GM12878 (cell line): ENCODE measurements at regions of chr7 and their contacts with region 1.

Region 1: DNA sequence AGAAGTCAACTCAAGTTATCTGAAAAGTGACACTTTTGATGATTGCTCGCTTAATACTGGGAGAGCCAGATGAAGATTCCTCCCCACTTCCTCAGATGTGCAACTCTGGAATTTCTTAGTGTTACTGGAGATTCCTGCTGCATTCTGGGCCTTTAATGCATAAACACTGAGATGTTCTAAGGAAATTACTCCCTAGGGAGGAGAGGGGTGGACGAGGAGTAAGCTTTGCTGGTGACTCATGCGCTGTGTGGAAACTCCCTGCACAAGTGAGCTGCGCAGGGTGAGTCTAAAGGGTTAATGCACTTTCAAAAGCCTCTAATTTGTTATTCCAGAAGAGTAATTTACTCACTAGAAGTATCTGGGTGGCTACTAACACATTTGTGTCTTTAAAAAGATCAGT is 46.3 kb downstream of the EGFR start:
- DNase-seq: peak; percentile 31
- ATAC-seq: peak; percentile 88
- H3K4me3 ChIP-seq: no peak overlapping the region
- H3K27ac ChIP-seq: no peak overlapping the region
- H3K4me1 ChIP-seq: peaks cover 3% of the 10 kb centered on the region; the same call in 1 of the 2 replicates
- H3K27me3 ChIP-seq: no peaks in the 10 kb centered on the region
- CTCF ChIP-seq: no peak
- EP300 ChIP-seq: no peak; a peak in 1 of 4 replicates
- POLR2A ChIP-seq: no peak
- RAD21 ChIP-seq: no peak

Region 2: DNA sequence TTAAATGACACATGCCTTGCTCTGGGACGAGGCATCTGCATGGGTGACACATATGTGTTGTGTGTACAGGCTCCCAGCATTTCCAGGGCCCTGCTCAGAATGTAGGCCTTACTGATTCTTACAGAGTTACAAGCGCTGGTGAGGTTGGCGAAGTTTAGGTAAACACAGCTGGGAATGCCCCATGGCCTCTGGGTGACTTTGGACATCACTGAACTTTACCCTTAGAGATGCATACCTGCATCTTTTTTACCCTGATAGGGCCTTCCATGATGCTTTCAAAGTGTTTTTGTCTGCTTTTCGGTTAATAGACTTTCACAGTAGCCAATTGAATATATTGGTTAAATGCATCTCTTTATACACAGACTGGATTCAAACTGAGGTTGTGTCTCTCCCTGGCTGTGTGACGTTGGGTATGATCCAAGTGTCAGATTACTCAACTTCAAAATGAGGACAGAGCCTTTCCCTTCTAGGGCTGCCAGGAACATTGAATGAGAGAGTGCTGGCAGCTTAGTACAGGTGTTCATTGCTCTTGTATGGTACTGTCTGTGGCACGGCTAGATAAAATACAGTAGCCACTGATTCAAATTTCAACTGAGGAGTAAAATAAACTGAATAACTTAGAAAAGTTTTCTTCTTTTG is 16.7 kb before region 1 on chr7:
- CTCF ChIA-PET with region 1: interaction called, 4 read pairs
- POLR2A ChIA-PET with region 1: interaction called, 4 read pairs
- RAD21 ChIA-PET with region 1: interaction called, 9 read pairs
- SMC1A ChIA-PET with region 1: interaction called, 12 read pairs
- in situ Hi-C with region 1: no loop called
- intact Hi-C with region 1: no loop called
- DNase-seq: no peak
- ATAC-seq: no peak
- H3K4me3 ChIP-seq: no peak overlapping the region
- H3K27ac ChIP-seq: no peak overlapping the region
- H3K4me1 ChIP-seq: no peaks in the 10 kb centered on the region
- H3K27me3 ChIP-seq: no peaks in the 10 kb centered on the region
- CTCF ChIP-seq: no peak
- EP300 ChIP-seq: no peak
- POLR2A ChIP-seq: no peak
- RAD21 ChIP-seq: no peak

Region 3: DNA sequence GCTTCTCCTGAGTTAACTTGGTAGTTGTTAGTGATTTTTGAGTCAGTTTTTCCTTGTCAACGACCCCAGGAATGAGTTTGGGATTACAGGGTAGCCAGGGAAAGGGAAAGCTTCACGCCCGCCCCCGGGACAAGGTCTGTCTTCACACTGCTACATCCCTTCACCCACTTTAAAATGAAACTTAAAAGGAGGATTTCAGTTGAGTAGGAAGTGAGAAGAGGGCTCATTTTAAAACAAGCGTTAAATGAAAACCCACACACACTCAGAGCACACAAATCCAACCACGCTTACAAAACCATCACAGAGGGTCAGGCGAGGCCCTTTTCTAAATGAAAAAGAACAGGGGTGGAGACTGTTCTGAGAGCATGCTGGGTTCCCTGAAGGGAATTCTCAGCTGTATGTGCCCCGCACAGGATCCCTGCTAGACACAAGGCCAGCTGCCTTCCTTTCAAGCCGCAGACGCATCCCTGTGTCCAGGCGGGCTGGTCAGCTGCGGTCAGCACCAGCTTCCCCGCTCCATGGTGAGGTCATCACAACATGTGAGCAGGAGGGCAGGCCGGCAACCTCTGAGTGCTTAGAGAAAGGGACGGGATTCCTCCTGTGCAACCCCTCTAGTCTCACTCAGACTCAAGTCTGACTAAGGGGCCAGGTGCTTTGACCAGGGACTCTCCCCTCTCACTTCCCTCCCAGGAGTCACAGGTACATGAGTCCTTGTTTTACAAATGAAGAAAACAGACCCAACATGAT is 65.5 kb after region 1 on chr7:
- CTCF ChIA-PET with region 1: interaction called, 6 read pairs
- POLR2A ChIA-PET with region 1: interaction called, 3 read pairs
- RAD21 ChIA-PET with region 1: interaction called, 9 read pairs
- SMC1A ChIA-PET with region 1: interaction called, 17 read pairs
- in situ Hi-C with region 1: no loop called
- intact Hi-C with region 1: no loop called
- DNase-seq: no peak
- ATAC-seq: peak; percentile 55
- H3K4me3 ChIP-seq: no peak overlapping the region
- H3K27ac ChIP-seq: no peak overlapping the region
- H3K4me1 ChIP-seq: peaks cover 3% of the 10 kb centered on the region; the same call in 1 of the 2 replicates
- H3K27me3 ChIP-seq: no peaks in the 10 kb centered on the region
- CTCF ChIP-seq: no peak
- EP300 ChIP-seq: no peak
- POLR2A ChIP-seq: no peak
- RAD21 ChIP-seq: no peak